ENCODE measurements at regions of chrX and their contacts with region 1.

Region 1: GRCh38 chrX:47836164-47837072 is at the start of gene ZNF81:
- DNase-seq: peak; percentile 93
- ATAC-seq: peak; percentile 92
- H3K4me3 Mint-ChIP-seq: peak within 1 kb of the TSS; percentile 95
- H3K27ac Mint-ChIP-seq: peak within 1 kb of the TSS; percentile 97
- H3K4me1 Mint-ChIP-seq: peaks cover 23% of the 10 kb centered on the region
- H3K27me3 Mint-ChIP-seq: no peaks in the 10 kb centered on the region
- total RNA-seq, gene ZNF81: 5.3 to 6.4 TPM

Region 2: GRCh38 chrX:47637546-47638195 is 198.7 kb before region 1 on chrX:
- CTCF ChIA-PET with region 1: no interaction called
- POLR2A ChIA-PET with region 1: no interaction called
- intact Hi-C with region 1: no loop called
- DNase-seq: peak; percentile 69
- ATAC-seq: peak; percentile 73
- H3K4me3 Mint-ChIP-seq: peak overlapping the region; percentile 55
- H3K27ac Mint-ChIP-seq: peak overlapping the region; percentile 72
- H3K4me1 Mint-ChIP-seq: peaks cover 27% of the 10 kb centered on the region
- H3K27me3 Mint-ChIP-seq: no peaks in the 10 kb centered on the region

Region 3: GRCh38 chrX:47650164-47651042 is 186.0 kb before region 1 on chrX and contains the start of gene ELK1:
- CTCF ChIA-PET with region 1: no interaction called
- POLR2A ChIA-PET with region 1: no interaction called
- intact Hi-C with region 1: loop called in 1 of 2 experiments (anchors 1 kb)
- DNase-seq: peak; percentile 93
- ATAC-seq: peak; percentile 95
- H3K4me3 Mint-ChIP-seq: peak within 1 kb of the TSS; percentile 92
- H3K27ac Mint-ChIP-seq: peak within 1 kb of the TSS; percentile 97
- H3K4me1 Mint-ChIP-seq: peaks cover 44% of the 10 kb centered on the region
- H3K27me3 Mint-ChIP-seq: no peaks in the 10 kb centered on the region
- total RNA-seq, gene ELK1: 96.8 to 117 TPM

Region 4: GRCh38 chrX:47796433-47796906 is 39.9 kb before region 1 on chrX:
- CTCF ChIA-PET with region 1: no interaction called
- POLR2A ChIA-PET with region 1: no interaction called
- intact Hi-C with region 1: no loop called
- DNase-seq: no peak
- ATAC-seq: no peak
- H3K4me3 Mint-ChIP-seq: no peak overlapping the region
- H3K27ac Mint-ChIP-seq: no peak overlapping the region
- H3K4me1 Mint-ChIP-seq: no peaks in the 10 kb centered on the region
- H3K27me3 Mint-ChIP-seq: no peaks in the 10 kb centered on the region

Region 5: GRCh38 chrX:47958761-47959342 is 122.4 kb after region 1 on chrX:
- CTCF ChIA-PET with region 1: interaction called, 3 read pairs
- POLR2A ChIA-PET with region 1: no interaction called
- intact Hi-C with region 1: loop called in 1 of 2 experiments (anchors 5 kb)
- DNase-seq: peak; percentile 29
- ATAC-seq: peak; percentile 78
- H3K4me3 Mint-ChIP-seq: no peak overlapping the region
- H3K27ac Mint-ChIP-seq: no peak overlapping the region
- H3K4me1 Mint-ChIP-seq: no peaks in the 10 kb centered on the region
- H3K27me3 Mint-ChIP-seq: no peaks in the 10 kb centered on the region

Region 6: DNA sequence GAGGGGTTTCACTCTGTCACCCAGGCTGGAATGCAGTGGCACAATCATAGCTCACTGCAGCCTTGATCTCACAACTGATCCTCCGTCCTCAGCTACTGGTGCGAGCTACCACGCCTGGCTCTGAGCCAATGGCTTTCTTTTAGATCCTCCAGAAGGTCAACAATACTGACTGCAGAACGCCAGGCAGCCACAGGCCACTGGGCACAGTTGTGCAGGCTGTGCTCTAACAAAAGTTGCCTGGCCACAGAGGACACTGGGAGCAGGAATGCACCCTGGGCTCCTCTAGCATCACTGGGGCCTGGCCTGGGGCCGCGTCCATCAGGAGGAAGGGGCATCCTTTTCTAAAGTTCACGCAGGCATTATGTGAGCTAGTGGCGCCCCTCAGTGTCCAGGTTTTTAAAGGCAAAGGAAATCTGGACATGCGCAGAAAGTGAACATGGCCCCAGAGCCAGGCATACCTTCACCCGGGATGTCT is 657.5 kb after region 1 on chrX:
- CTCF ChIA-PET with region 1: no interaction called
- POLR2A ChIA-PET with region 1: no interaction called
- intact Hi-C with region 1: loop called in 1 of 2 experiments (anchors 5 kb)
- DNase-seq: peak; percentile 52
- ATAC-seq: peak; percentile 44
- H3K4me3 Mint-ChIP-seq: no peak overlapping the region
- H3K27ac Mint-ChIP-seq: no peak overlapping the region
- H3K4me1 Mint-ChIP-seq: no peaks in the 10 kb centered on the region
- H3K27me3 Mint-ChIP-seq: no peaks in the 10 kb centered on the region

Measured in activated CD4-positive, alpha-beta T cell treated with anti-CD3 and anti-CD28 coated beads for 36 hours (primary cell).